SK-N-SH (cell line): ENCODE measurements at regions of chr22 and their contacts with region 1.

Region 1: DNA sequence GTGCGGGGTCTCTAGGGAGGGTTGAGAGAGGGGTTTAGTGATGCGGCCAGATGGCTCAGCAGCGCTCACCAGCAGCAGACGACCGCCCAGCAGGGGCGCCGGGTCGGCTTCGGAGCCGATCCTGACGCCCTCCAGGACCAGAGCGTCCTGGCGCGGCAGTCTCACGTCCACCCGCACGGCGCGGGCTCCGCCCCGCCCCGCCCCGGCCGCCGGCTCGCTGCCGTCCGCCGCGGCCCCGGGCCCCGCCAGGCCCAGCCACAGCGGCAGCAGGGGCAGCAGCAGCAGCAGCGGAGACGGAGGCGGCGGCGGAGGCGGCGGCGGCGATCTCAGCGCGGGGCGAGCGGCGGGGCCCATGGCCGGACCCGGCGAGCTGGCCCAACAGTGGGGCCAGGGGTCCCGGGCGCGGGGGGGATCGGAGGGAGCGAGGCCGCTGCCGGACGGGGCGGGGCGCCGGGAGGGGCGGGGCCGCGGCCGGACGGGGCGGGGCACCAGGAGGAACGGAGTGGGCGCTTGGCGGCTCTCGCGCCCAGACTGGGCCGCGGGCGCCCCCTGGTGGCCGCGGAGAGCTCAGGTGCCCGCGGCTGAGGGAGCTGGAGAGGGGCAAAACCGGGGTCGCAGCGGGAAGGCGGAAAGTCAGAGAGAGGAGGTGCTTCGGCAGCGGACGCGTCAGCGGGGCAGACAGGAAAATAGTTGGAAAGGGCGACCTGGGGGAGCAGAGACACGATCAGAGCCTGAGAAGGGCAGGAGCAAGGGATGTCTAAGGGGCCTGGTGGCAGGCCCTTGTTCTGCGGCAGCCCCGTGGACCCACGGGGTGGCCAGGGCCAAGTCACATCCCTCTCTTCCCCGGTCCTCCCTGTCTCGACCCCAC is at the start of gene RNF215:
- DNase-seq: peak; percentile 99
- H3K4me3 ChIP-seq: peak within 1 kb of the TSS; percentile 61 to 82
- H3K27ac ChIP-seq: peak within 1 kb of the TSS in 1 of 2 experiments; percentile 76; a peak in 2 of 4 replicates
- H3K4me1 ChIP-seq: peaks cover 4 to 12% of the 10 kb centered on the region in 2 experiments; a peak in 3 of 4 replicates
- H3K27me3 ChIP-seq: no peaks in the 10 kb centered on the region
- CTCF ChIP-seq: peak; percentile 85
- EP300 ChIP-seq: no peak
- RAD21 ChIP-seq: peak; percentile 80
- polyA plus RNA-seq, gene RNF215: 28.6 and 37.2 TPM in 2 replicates

Region 2: DNA sequence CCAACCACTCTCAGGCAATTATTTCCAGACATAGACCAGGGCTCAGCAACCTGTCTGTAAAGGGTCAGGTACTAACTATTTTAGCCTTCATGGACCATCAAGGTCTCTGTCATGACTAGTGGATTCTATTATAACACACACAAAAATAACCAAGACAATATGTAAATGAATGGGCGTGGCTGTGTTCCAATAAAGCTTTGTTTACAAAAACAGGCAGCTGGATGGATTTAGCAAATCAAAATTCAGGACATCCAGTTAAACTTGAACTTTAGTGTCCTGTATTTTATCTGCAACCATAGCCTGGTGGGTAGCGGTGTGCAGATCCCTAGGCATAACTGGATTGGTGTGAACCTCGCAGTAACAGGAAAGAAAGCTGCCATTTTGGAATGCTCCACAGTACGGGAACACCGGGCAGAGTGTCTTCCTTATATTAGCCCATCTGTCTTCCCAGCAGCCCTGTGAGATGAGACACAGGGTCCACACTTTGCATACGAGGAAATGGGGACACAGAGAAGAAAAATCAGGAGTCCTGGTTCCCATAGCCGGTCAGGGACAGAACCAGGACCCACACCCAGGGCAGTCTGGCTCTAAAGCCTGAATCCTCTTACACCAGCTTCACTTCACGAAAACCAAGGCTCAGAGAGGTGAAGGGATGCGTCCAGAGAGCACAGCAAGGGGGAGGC is 156.3 kb before region 1 on chr22:
- CTCF ChIA-PET with region 1: no interaction called
- POLR2A ChIA-PET with region 1: no interaction called
- DNase-seq: no peak
- H3K4me3 ChIP-seq: no peak overlapping the region
- H3K27ac ChIP-seq: no peak overlapping the region
- H3K4me1 ChIP-seq: peaks cover 5 to 9% of the 10 kb centered on the region in 2 experiments; a peak in 3 of 4 replicates
- H3K27me3 ChIP-seq: no peaks in the 10 kb centered on the region
- CTCF ChIP-seq: no peak
- EP300 ChIP-seq: no peak
- RAD21 ChIP-seq: no peak

Region 3: DNA sequence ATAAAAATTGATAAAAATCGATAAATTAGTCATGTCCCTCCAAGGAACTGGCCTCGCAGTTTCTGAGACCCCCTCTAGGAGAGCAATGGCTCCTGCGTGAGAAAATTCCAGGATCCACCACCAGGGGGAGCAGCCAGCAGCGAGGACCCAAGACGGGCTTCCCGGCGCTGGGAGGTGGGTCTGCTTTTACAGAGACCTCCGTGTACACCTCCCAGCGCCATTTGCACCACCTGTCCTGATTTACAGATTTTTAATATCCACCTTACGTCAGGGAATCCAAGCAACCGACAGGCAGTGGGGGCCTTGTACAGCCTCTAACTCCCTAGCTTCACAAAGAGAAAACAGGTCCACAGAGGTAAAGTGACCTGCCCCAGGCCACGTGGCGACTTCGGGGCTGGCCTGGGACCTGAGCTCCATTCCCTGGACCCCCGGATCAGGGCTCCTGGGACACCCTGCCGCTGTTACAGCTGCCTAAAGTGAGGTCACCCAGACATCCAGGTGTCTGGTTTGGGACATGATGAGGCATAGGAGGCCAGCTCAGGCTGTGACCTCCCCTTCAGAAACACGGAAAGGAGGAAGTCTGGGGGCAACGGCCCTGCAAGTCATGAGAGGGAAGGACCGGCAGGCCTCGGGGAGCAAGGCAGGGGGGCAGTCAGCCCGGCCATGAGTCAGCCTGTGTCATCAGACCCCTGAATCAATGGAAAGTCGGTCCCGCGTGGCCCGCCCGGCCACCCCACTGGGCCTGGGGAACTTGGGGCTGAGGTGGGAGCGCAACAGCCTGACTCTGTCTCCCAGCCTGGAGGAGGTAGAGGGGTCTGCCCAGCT is 124.1 kb before region 1 on chr22:
- CTCF ChIA-PET with region 1: interaction called, 43 read pairs
- POLR2A ChIA-PET with region 1: no interaction called
- DNase-seq: peak; percentile 92
- H3K4me3 ChIP-seq: peak overlapping the region in 1 of 2 experiments; percentile 43; a peak in 1 of 4 replicates
- H3K27ac ChIP-seq: no peak overlapping the region
- H3K4me1 ChIP-seq: peaks cover 3 to 5% of the 10 kb centered on the region in 2 experiments; a peak in 2 of 4 replicates
- H3K27me3 ChIP-seq: no peaks in the 10 kb centered on the region
- CTCF ChIP-seq: peak; percentile 96
- EP300 ChIP-seq: no peak
- RAD21 ChIP-seq: peak; percentile 68

Region 4: GRCh38 chr22:30356449-30357235 is 30.6 kb before region 1 on chr22 and contains the starts of genes CCDC157 and SF3A1:
- CTCF ChIA-PET with region 1: interaction called, 11 read pairs
- POLR2A ChIA-PET with region 1: interaction called, 5 read pairs
- DNase-seq: peak; percentile 96
- H3K4me3 ChIP-seq: peak within 1 kb of the TSS; percentile 79 to 95
- H3K27ac ChIP-seq: peak within 1 kb of the TSS; percentile 93 to 95
- H3K4me1 ChIP-seq: peaks cover 12 to 14% of the 10 kb centered on the region in 2 experiments; a peak in 2 of 4 replicates
- H3K27me3 ChIP-seq: no peaks in the 10 kb centered on the region
- CTCF ChIP-seq: no peak
- EP300 ChIP-seq: no peak
- RAD21 ChIP-seq: no peak
- polyA plus RNA-seq, gene CCDC157: 5.8 and 7.9 TPM in 2 replicates
- polyA plus RNA-seq, gene SF3A1: 37.5 and 75.2 TPM in 2 replicates

Region 5: DNA sequence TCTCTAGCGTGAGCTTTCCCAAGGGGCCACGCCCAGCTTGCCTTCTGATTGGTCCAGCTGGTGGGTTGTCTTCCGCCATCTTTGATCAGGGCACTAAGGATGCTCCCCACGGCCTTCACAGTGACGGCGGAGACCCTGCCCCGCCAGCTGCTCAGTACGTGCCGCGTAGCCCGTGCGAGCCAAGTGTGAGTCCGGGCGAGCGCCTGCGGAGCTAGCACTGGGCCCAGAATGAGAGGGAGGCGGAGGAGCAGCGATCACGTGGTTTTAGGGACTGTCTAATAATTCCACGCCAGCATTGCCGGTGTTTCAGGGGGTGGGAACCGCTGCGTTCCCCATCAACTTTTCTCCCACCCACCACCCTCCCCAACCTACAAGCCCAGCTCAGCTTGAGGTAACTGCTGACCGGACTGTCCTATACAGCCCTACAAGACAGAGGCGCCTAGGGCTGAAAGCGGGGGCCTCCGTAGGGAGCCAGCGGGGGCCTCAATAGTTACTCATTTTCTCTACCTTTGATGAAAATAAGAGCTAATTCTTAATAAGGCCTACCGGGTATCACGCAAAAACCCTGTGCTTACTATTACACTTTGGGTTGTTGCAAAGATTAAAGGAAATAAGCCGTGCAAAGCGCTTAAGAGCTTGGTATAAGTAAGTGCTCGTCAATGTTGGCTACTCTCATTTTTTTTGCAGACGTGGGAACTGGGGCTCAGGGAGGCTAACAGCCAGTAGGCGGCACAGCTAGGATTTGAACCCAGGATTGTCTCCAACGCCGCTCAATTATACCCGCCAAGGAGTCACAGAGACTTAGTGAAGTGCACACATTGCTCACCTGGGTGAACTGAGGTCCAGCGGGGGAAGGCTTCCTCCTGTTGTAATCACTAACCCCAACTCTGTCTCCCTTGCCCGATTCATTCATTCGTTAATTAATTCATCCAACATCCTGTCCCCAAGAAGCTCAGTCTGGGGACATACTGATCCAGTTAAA is 37.1 kb after region 1 on chr22:
- CTCF ChIA-PET with region 1: interaction called, 20 read pairs
- POLR2A ChIA-PET with region 1: interaction called, 3 read pairs
- DNase-seq: peak; percentile 93
- H3K4me3 ChIP-seq: peak overlapping the region; percentile 67 to 74
- H3K27ac ChIP-seq: peak overlapping the region; percentile 97 to 99
- H3K4me1 ChIP-seq: peaks cover 41 to 46% of the 10 kb centered on the region in 2 experiments
- H3K27me3 ChIP-seq: no peaks in the 10 kb centered on the region
- CTCF ChIP-seq: no peak
- EP300 ChIP-seq: peak in 1 of 2 experiments; percentile 30; a peak in 1 of 4 replicates
- RAD21 ChIP-seq: no peak

Region 6: GRCh38 chr22:30485362-30485988 is 98.3 kb after region 1 on chr22:
- CTCF ChIA-PET with region 1: interaction called, 14 read pairs
- POLR2A ChIA-PET with region 1: no interaction called
- DNase-seq: peak; percentile 92
- H3K4me3 ChIP-seq: peak overlapping the region in 1 of 2 experiments; percentile 42; a peak in 1 of 4 replicates
- H3K27ac ChIP-seq: no peak overlapping the region
- H3K4me1 ChIP-seq: no peaks in the 10 kb centered on the region; a peak in 1 of 4 replicates
- H3K27me3 ChIP-seq: no peaks in the 10 kb centered on the region; the same call in 1 of the 2 replicates
- CTCF ChIP-seq: peak; percentile 89
- EP300 ChIP-seq: no peak
- RAD21 ChIP-seq: peak; percentile 78

Region 7: GRCh38 chr22:30541961-30542810 is 155.0 kb after region 1 on chr22:
- CTCF ChIA-PET with region 1: no interaction called
- POLR2A ChIA-PET with region 1: no interaction called
- DNase-seq: no peak
- H3K4me3 ChIP-seq: no peak overlapping the region
- H3K27ac ChIP-seq: no peak overlapping the region
- H3K4me1 ChIP-seq: peaks cover 0 to 7% of the 10 kb centered on the region in 2 experiments; a peak in 1 of 4 replicates
- H3K27me3 ChIP-seq: no peaks in the 10 kb centered on the region
- CTCF ChIP-seq: no peak
- EP300 ChIP-seq: no peak
- RAD21 ChIP-seq: no peak

Region 8: DNA sequence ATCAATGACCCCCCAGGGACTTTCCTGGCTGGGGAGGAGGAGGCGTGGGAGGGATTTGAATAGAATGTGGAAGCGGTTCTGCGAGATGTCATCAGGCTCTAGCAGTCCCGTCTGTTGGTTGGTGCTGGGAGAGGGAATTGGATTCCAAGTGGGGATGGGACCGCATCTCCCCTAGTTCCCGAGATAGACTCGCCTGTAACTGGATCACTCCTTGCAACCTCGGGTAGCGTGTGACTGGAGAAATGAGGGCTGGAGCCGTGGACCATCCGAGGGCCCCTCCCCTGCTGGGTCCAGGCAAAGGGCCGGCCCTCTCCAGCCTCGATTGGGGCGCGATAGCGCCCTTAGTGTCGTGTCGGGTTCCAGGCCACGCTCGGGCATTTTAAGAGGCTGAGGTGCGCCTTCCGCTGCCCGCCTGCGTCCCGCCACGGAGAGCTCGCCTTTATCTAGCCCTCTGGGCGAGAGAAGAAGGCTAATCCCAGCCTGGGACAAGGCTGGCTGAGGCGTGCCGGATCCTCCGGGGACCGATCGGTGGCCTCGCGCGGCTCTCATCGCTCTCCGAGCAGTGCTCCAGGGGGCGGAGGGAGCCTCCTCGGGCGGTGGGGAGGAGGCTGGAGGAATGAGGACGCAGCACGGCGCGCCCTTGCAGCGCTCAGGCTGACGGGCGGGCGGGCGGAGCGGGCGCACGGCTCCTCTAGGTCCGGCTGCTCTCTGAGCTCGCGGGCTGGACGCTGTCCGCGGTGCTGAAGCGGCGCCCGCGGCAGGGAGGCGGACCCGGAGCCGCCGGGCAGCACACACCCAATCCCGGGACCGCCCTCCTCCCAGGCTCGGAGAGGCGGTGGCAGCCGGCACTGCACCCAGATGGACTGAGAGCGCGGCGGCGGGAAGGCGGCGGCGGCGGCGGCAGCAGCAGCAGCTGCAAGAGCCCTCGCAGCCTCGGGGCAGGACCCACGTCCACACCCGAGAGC is 415.3 kb after region 1 on chr22:
- CTCF ChIA-PET with region 1: no interaction called
- POLR2A ChIA-PET with region 1: no interaction called
- DNase-seq: peak; percentile 90
- H3K4me3 ChIP-seq: peak overlapping the region; percentile 43 to 61
- H3K27ac ChIP-seq: no peak overlapping the region
- H3K4me1 ChIP-seq: peaks cover 8 to 13% of the 10 kb centered on the region in 2 experiments; a peak in 2 of 4 replicates
- H3K27me3 ChIP-seq: 0 out of 2 replicates have a peak, but pooled peaks cover 6% of the 10 kb centered on the region
- CTCF ChIP-seq: no peak; the same call in 1 of the 2 replicates
- EP300 ChIP-seq: no peak
- RAD21 ChIP-seq: no peak